ENCODE measurements at regions of chr14 and their contacts with region 1.

Region 1: GRCh38 chr14:103385152-103385993 is at the start of gene MARK3:
- DNase-seq: peak in 1 of 2 donors; percentile 97
- H3K4me3 ChIP-seq: peak within 1 kb of the TSS; percentile 67 to 79
- H3K27ac ChIP-seq: peak within 1 kb of the TSS; percentile 98
- H3K4me1 ChIP-seq: peaks cover 38% of the 10 kb centered on the region
- H3K27me3 ChIP-seq: no peaks in the 10 kb centered on the region
- CTCF ChIP-seq: no peak
- POLR2A ChIP-seq: peak in 1 of 2 donors; percentile 92
- total RNA-seq, gene MARK3: 77.6 TPM

Region 2: DNA sequence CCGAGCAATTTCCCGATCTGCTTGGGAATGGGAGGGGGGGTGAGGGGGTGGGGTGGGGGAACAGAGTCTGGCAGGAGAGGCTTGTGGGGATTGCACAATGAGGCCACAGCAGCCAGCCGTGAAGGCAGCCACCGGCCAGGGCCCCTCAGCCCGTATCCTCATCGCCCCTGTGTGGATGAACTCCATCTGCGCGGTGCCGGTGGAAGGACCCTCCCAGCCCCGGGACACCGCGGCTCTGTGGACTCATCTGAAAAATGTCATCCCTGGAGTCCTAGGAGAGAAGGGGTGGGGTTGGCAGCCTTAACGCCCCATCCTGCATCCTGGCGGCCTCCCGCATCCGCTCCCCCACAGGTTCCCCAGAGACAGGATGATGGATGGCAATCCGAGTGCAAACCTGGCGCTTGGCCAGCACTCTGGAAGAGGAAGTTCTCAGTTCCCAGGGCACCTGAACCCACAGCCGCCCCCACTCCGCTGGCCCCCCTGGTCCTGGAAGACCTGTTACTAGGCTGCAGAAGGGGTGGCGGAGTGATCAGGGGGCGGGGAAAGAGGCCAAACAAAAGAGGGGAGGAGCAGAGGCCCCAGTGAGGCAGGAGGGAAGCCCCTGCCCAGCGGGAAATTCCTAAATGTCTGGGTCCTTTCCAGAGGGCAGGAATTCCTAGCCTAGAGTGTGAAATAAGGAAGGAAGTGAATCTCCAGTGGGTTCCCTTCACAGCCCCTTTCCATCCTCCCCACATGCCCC is 263.4 kb before region 1 on chr14:
- intact Hi-C with region 1: loop called (anchors 5 kb)
- DNase-seq: peak in 1 of 2 donors; percentile 97
- H3K4me3 ChIP-seq: peak overlapping the region; percentile 53 to 59
- H3K27ac ChIP-seq: peak overlapping the region; percentile 93
- H3K4me1 ChIP-seq: peaks cover 73% of the 10 kb centered on the region
- H3K27me3 ChIP-seq: no peaks in the 10 kb centered on the region
- CTCF ChIP-seq: no peak
- POLR2A ChIP-seq: no peak

Region 3: GRCh38 chr14:103333754-103334643 is 51.4 kb before region 1 on chr14 and contains the start of gene EIF5:
- intact Hi-C with region 1: loop called (anchors 1 kb)
- DNase-seq: peak in 1 of 2 donors; percentile 99
- H3K4me3 ChIP-seq: peak within 1 kb of the TSS; percentile 98 to 99
- H3K27ac ChIP-seq: peak within 1 kb of the TSS; percentile 100
- H3K4me1 ChIP-seq: peaks cover 42% of the 10 kb centered on the region
- H3K27me3 ChIP-seq: no peaks in the 10 kb centered on the region
- CTCF ChIP-seq: peak in 1 of 3 experiments; percentile 45
- POLR2A ChIP-seq: peak; percentile 93 to 95
- total RNA-seq, gene EIF5: 186 TPM

Region 4: GRCh38 chr14:103528587-103529382 is 143.4 kb after region 1 on chr14 and contains the start of gene TRMT61A:
- intact Hi-C with region 1: no loop called
- DNase-seq: no peak
- H3K4me3 ChIP-seq: peak within 1 kb of the TSS; percentile 67 to 73
- H3K27ac ChIP-seq: peak within 1 kb of the TSS; percentile 90
- H3K4me1 ChIP-seq: peaks cover 72% of the 10 kb centered on the region
- H3K27me3 ChIP-seq: no peaks in the 10 kb centered on the region
- CTCF ChIP-seq: no peak
- POLR2A ChIP-seq: no peak
- total RNA-seq, gene TRMT61A: 17.7 TPM

Measured in vagina (tissue), 2 donors.